ENCODE measurements at regions of chr1 and their contacts with region 1.

Region 1: DNA sequence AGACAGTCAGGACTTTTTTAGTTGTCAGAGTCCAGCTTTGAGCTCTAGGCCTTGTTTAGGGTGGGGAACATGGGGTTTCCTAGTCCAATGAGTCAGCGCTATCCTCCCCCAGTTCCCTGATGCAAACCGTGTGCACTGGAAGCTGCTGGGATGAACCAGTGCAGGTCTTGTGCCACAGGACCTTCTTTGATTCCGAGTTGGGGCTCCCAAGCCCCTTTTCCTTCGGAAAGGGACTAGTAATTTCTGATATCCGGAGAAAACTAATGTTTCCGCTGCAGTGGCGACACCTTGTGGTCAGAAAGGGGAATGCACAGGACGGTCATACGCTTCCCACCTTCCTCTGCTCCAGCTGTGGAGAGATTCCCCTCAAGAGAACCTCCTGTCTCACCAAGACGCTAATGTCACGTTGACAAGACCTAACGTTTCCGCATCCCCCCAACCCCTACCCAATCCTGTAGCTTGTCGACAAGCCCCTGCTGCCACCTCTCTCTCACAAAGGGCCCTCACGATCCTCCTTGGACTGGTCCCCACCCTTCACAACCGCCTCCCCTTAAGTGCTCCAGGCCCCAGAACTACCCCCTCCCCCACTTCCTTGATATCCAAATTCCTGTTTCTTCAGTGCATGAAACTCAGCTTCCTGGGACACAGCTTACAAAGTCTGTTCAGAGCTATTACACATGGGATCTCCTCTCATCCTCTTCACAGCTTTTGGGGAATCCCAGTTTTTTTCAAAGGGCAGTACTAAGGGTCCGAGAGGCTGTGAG is 30.9 kb downstream of the GPA33 start:
- DNase-seq: peak; percentile 71
- H3K4me3 ChIP-seq: no peak overlapping the region
- H3K27ac ChIP-seq: no peak overlapping the region
- H3K4me1 ChIP-seq: peaks cover 7% of the 10 kb centered on the region
- CTCF ChIP-seq: peak; percentile 99

Region 2: GRCh38 chr1:166910396-166910994 is 148.7 kb before region 1 on chr1:
- CTCF ChIA-PET with region 1: interaction called, 105 read pairs
- POLR2A ChIA-PET with region 1: interaction called, 18 read pairs
- intact Hi-C with region 1: loop called (anchors 1 kb)
- DNase-seq: peak; percentile 88
- H3K4me3 ChIP-seq: no peak overlapping the region
- H3K27ac ChIP-seq: no peak overlapping the region
- H3K4me1 ChIP-seq: peaks cover 6% of the 10 kb centered on the region
- CTCF ChIP-seq: peak; percentile 97

Region 3: GRCh38 chr1:166975361-166976129 is 83.7 kb before region 1 on chr1 and contains the start of gene ILDR2:
- CTCF ChIA-PET with region 1: no interaction called
- POLR2A ChIA-PET with region 1: no interaction called
- intact Hi-C with region 1: loop called (anchors 5 kb)
- DNase-seq: peak; percentile 68
- H3K4me3 ChIP-seq: peak within 1 kb of the TSS; percentile 78
- H3K27ac ChIP-seq: no peak within 1 kb of the TSS
- H3K4me1 ChIP-seq: peaks cover 18% of the 10 kb centered on the region
- CTCF ChIP-seq: no peak
- total RNA-seq, gene ILDR2: 5.3 and 6.0 TPM in 2 replicates

Region 4: GRCh38 chr1:167447521-167448136 is 388.4 kb after region 1 on chr1:
- CTCF ChIA-PET with region 1: interaction called, 12 read pairs
- POLR2A ChIA-PET with region 1: interaction called, 3 read pairs
- intact Hi-C with region 1: no loop called
- DNase-seq: peak; percentile 80
- H3K4me3 ChIP-seq: peak overlapping the region; percentile 46
- H3K27ac ChIP-seq: peak overlapping the region; percentile 41
- H3K4me1 ChIP-seq: peaks cover 49% of the 10 kb centered on the region
- CTCF ChIP-seq: no peak; the same call in 1 of the 2 replicates